Activated CD8-positive, alpha-beta T cell treated with anti-CD3 and anti-CD28 coated beads, Interleukin-2, amount 10 ng/mL, durations not matched to agents 7 days and 5 days (primary cell): ENCODE measurements at regions of chrX and their contacts with region 1.

Region 1: GRCh38 chrX:54529552-54530357 is at the start of gene GNL3L:
- DNase-seq: peak; percentile 85
- ATAC-seq: peak; percentile 89
- H3K4me3 Mint-ChIP-seq: peak within 1 kb of the TSS; percentile 95
- H3K27ac Mint-ChIP-seq: peak within 1 kb of the TSS; percentile 98
- H3K4me1 Mint-ChIP-seq: peaks cover 32% of the 10 kb centered on the region
- H3K27me3 Mint-ChIP-seq: no peaks in the 10 kb centered on the region
- total RNA-seq, gene GNL3L: 55.2 to 57.7 TPM

Region 2: DNA sequence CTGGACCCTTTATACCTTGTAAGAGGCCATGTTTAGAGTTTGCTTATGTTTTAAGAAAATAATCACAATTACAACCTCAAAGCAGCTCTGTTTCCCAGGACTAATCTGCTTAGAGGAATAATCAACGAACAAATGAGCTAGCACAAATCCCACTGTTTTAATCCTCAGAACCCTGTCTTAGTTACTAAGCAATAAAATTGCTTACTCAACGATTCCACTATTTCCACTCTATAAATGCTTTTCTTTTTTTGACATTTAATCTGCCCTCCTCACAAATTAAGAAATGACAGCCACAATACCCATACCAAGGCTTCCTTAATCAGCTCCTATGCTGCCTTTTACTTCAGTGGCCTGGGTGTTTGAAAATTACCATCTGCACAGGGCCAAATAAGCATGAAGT is 395.5 kb before region 1 on chrX:
- CTCF ChIA-PET with region 1: no interaction called
- POLR2A ChIA-PET with region 1: no interaction called
- DNase-seq: no peak
- ATAC-seq: no peak
- H3K4me3 Mint-ChIP-seq: no peak overlapping the region
- H3K27ac Mint-ChIP-seq: no peak overlapping the region
- H3K4me1 Mint-ChIP-seq: no peaks in the 10 kb centered on the region
- H3K27me3 Mint-ChIP-seq: no peaks in the 10 kb centered on the region

Region 3: DNA sequence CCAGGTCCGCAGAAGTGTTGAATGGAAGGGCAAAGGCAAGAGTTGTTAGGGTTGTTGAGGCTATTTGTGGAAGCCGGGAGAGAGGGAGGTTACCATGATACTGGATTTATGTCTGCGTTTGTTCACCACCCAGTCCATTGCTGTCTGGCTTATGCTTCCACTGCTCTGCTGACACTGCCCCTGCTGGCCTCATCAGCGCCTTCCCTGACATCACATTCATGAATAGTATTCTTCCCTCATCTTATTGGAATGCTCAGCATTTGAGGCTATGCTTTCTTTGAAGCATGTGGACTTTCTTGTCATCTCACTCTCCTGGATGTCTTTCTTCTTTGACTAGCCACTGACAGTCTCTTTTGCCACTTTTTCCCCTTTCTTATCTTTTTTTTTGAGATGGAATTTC is 10.5 kb after region 1 on chrX:
- CTCF ChIA-PET with region 1: no interaction called
- POLR2A ChIA-PET with region 1: no interaction called
- DNase-seq: no peak
- ATAC-seq: no peak
- H3K4me3 Mint-ChIP-seq: no peak overlapping the region
- H3K27ac Mint-ChIP-seq: no peak overlapping the region
- H3K4me1 Mint-ChIP-seq: peaks cover 1% of the 10 kb centered on the region
- H3K27me3 Mint-ChIP-seq: no peaks in the 10 kb centered on the region

Region 4: GRCh38 chrX:54639346-54640102 is 109.8 kb after region 1 on chrX:
- CTCF ChIA-PET with region 1: no interaction called
- POLR2A ChIA-PET with region 1: interaction called, 19 read pairs
- DNase-seq: peak; percentile 96
- ATAC-seq: peak; percentile 97
- H3K4me3 Mint-ChIP-seq: peak overlapping the region; percentile 92
- H3K27ac Mint-ChIP-seq: peak overlapping the region; percentile 99
- H3K4me1 Mint-ChIP-seq: peaks cover 12% of the 10 kb centered on the region
- H3K27me3 Mint-ChIP-seq: no peaks in the 10 kb centered on the region